Activated T-helper 1 cell treated with anti-CD3 and anti-CD28 coated beads, Interleukin-12 subunit alpha, Interleukin-12 subunit beta, Interleukin-2, Interleukin-4 antibody, amounts not matched to agents 30 ng/mL and 10 ng/mL and 1 ng/mL, durations not matched to agents 14 hours and 24 hours and 36 hours (primary cell): ENCODE measurements at regions of chr12 and their contacts with region 1.

Region 1: DNA sequence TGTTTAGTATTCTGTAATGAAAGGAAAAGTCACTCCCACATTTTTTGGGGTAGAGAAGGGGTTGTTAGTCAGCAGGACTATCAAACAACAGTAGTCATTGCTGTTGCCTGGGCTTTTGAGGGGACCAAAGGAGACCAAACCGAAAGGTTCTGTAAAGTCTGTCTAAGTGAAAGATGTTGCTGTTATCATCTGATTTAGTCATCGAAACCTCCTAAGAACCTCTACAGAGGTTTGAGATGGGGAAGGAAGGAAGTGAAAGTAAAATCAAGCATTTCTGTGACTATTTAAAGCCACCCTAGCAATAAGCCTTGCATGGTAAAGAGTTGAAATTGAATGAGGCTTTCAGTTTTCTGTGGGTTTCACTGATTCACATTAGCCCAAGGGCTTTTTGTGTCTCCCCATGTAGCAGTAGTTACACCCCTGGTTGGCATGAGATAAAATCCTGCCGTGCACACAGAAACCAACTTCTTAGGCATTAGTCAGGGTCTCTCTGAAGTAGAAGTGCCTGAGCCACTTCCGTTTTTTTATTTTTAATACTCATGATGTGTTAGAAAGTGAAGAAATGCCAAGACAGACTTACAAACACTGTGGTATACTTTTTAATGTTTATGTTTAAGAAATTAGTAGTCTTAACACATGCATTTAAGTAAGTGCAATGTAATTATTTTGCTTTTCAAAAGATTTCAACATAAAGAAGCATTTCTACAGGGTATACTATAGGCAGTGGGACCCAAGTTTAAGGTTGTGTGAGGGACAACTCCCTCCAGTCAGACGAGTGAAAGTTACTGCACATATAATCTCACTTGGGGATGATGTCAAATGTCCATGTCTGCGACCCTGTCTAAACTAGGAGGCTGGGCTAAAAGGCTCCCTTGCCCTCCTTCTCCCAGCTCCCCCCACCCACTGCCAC is 50.4 kb downstream of the DYRK2 start:
- DNase-seq: peak; percentile 34
- H3K4me3 Mint-ChIP-seq: peak overlapping the region; percentile 42
- H3K27ac Mint-ChIP-seq: peak overlapping the region; percentile 67
- H3K4me1 Mint-ChIP-seq: peaks cover 49% of the 10 kb centered on the region
- H3K27me3 Mint-ChIP-seq: peaks cover 53% of the 10 kb centered on the region

Region 2: DNA sequence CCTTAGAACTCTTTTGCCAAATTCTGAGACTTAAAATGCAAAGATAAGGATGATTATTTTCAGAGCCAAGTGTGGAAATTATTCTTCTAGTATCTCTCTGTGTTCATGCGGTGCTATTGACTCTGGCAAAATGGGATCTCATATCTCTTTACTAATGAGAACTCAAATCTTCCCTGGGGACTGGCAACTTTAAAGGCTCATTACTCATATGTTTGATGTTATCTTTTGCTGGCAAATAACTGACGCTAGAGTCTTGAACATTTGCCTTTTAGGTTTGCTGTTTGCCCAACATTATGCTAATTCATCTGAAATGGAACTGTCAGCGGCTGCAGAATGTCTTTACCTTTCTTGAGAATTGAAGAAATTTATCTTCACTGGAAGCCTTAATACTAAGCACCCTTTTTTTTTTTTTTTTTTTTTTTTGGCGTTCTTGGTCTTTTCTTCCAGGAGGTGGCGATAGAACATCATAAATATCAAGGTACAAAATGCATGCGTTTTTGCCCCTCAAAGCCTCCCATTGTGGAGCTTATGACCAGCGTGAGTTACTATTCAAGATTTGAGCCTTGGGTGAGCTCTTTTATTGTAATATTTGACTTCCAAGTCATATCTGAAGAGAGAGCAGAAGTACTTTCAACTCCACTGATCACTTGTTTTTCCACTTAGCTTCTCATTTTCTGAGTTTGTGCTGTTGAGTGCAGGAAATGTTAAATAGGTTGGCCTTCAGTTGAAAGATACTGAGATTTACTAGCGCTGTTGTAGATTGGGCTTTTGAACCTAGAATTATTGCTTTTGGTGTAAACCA is 343.1 kb before region 1 on chr12:
- intact Hi-C with region 1: loop called (anchors 1 kb)
- DNase-seq: no peak
- H3K4me3 Mint-ChIP-seq: no peak overlapping the region
- H3K27ac Mint-ChIP-seq: no peak overlapping the region
- H3K4me1 Mint-ChIP-seq: peaks cover 23% of the 10 kb centered on the region
- H3K27me3 Mint-ChIP-seq: no peaks in the 10 kb centered on the region

Region 3: DNA sequence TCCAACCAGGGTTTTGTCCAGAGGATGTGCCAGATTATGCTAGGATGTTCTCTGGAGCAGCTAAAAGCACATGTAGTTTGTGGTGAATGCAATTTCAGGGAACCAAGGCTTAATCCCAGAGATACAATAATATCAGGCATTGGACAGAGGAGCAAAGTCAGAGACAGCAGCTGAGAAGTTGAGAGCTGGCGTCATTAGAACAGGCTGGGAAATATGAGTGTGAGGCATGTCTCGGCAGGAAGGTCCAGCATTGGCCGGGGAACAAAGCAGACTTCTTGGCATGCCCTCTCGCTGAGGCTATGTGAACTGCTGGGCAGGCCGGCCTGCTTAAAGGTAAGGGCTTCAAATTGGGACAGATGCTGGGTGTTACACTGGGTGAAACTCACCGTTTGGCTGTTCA is 304.4 kb before region 1 on chr12:
- intact Hi-C with region 1: no loop called
- DNase-seq: no peak
- H3K4me3 Mint-ChIP-seq: no peak overlapping the region
- H3K27ac Mint-ChIP-seq: no peak overlapping the region
- H3K4me1 Mint-ChIP-seq: no peaks in the 10 kb centered on the region
- H3K27me3 Mint-ChIP-seq: peaks cover 3% of the 10 kb centered on the region

Region 4: GRCh38 chr12:67498991-67499390 is 199.9 kb before region 1 on chr12:
- intact Hi-C with region 1: no loop called
- DNase-seq: no peak
- H3K4me3 Mint-ChIP-seq: no peak overlapping the region
- H3K27ac Mint-ChIP-seq: no peak overlapping the region
- H3K4me1 Mint-ChIP-seq: peaks cover 8% of the 10 kb centered on the region
- H3K27me3 Mint-ChIP-seq: peaks cover 3% of the 10 kb centered on the region

Region 5: DNA sequence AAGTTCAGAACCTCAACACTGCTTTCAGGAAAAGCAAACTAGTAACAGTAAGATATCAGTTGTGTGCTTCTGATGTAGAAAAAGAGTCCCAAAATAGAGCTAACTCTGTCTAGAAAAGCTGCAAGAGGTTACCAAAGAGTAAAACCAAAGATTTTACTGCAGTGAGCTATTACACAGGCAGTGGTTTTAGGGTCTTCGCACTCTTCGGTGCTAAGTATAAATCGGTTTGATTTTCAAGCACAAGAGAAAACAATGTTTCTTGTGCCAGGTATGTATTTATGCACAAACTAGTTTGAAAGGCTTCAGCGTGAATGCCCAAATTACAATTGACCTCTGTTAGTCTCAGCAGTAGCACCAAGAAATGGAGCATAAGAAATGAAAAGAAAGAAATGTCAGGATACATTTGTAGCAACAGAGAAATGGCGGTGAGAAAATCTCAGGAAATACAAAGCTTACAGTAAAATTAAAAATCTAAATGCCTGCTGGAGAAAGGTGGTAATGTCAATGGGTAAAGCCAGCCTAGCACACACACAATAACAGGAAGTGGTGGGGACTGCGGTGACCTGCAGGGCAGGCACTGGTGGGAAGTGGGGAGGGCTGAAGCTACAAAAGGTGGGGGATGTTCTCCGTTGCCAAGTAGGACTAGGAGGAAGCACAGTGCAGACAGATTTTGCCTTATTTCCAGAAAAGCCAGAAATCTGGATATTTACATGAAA is 68.4 kb before region 1 on chr12:
- intact Hi-C with region 1: loop called (anchors 1 kb)
- DNase-seq: peak; percentile 81
- H3K4me3 Mint-ChIP-seq: peak overlapping the region; percentile 37
- H3K27ac Mint-ChIP-seq: peak overlapping the region; percentile 89
- H3K4me1 Mint-ChIP-seq: peaks cover 62% of the 10 kb centered on the region
- H3K27me3 Mint-ChIP-seq: no peaks in the 10 kb centered on the region

Region 6: DNA sequence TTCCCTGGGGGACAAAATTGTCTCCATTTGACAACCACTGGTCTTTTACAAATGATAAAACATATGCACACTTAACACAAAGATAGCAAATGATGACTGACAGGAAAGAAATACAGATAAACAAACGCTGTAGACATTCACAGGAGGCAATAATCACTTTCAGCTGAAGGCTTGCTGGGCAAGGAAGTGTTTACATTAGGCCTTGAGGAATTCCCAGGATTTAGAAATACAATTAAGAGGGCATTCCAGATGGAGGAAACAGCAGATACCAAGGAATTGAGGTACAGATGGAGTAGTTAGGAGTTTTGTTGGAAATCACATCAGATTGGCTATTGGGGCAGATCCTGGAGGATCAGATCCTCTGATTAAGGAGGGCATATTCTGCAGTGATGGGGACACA is 43.5 kb after region 1 on chr12:
- intact Hi-C with region 1: no loop called
- DNase-seq: no peak
- H3K4me3 Mint-ChIP-seq: no peak overlapping the region
- H3K27ac Mint-ChIP-seq: no peak overlapping the region
- H3K4me1 Mint-ChIP-seq: no peaks in the 10 kb centered on the region
- H3K27me3 Mint-ChIP-seq: peaks cover 2% of the 10 kb centered on the region

Region 7: DNA sequence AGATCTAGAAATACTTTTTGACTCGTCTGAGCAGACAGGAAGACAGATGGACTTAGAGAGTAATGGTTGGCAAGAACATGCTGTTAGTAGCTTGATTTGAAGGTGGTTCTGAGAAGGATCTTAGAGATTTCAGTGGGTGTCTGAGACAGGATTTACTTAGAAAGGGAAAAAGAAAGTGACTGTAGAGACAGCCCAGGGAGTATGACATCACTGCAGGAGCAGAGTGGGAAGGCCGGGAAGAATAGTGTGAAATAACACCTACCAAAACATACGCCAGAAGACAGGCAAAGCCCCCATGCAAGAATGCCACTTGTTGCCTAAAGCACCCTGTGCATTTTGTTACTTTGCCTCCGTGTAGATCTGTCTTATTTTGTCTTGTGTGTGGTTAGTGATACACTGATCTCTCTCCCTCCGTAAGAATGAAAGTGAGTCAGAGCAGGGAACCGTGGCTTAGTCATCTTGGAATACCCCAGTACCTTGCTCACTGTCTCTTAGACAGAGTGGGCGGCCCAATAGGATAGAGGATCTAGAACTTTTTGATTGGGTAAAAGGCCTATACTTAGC is 129.0 kb after region 1 on chr12:
- intact Hi-C with region 1: loop called (anchors 1 kb)
- DNase-seq: no peak
- H3K4me3 Mint-ChIP-seq: peak overlapping the region; percentile 3
- H3K27ac Mint-ChIP-seq: peak overlapping the region; percentile 67
- H3K4me1 Mint-ChIP-seq: peaks cover 14% of the 10 kb centered on the region
- H3K27me3 Mint-ChIP-seq: no peaks in the 10 kb centered on the region

Region 8: GRCh38 chr12:68080577-68080976 is 381.6 kb after region 1 on chr12:
- intact Hi-C with region 1: loop called (anchors 2 kb)
- DNase-seq: peak; percentile 57
- H3K4me3 Mint-ChIP-seq: peak overlapping the region; percentile 2
- H3K27ac Mint-ChIP-seq: peak overlapping the region; percentile 80
- H3K4me1 Mint-ChIP-seq: peaks cover 57% of the 10 kb centered on the region
- H3K27me3 Mint-ChIP-seq: no peaks in the 10 kb centered on the region

Region 9: GRCh38 chr12:68279227-68280054 is 580.5 kb after region 1 on chr12:
- intact Hi-C with region 1: loop called (anchors 10 kb)
- DNase-seq: no peak
- H3K4me3 Mint-ChIP-seq: no peak overlapping the region
- H3K27ac Mint-ChIP-seq: peak overlapping the region; percentile 45
- H3K4me1 Mint-ChIP-seq: peaks cover 61% of the 10 kb centered on the region
- H3K27me3 Mint-ChIP-seq: no peaks in the 10 kb centered on the region

Region 10: GRCh38 chr12:68530965-68531364 is 832.0 kb after region 1 on chr12:
- intact Hi-C with region 1: no loop called
- DNase-seq: no peak
- H3K4me3 Mint-ChIP-seq: no peak overlapping the region
- H3K27ac Mint-ChIP-seq: no peak overlapping the region
- H3K4me1 Mint-ChIP-seq: peaks cover 11% of the 10 kb centered on the region
- H3K27me3 Mint-ChIP-seq: peaks cover 6% of the 10 kb centered on the region